ENCODE measurements at regions of chr3 and their contacts with region 1.

Region 1: DNA sequence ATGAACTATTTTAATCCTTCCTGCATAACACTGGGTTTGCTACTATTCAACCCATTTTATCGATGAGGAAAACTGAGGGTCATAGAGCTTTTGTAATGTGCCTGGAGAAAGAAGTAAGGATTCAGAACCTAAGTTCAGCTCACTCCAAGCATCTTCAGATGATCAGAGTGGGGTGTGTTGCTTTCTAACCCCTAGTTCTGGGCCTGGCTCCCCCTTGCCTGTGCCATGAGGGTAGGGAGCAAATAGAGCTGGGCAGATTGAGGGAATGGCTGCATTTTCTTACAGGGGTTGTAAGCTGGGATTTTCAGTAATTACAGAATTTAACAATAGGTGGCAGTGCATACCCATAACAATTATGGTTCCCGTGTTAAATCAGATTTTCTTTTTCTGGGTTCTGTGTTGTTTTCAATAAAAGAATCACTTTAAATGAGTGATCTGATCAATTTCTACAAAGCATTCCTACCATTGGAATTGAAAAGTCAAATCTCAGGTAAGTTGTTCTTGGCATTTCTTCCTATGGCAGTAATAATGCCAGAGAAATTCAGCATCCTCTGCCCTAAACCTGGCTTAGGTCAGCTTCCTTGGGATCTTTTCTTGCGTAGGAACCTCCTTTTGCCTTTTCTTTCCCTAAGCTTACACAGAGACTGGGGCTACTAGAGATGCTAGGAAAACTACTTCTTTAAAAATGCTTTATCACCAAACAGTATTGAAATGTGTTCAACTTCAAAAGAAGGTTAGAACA is 103.8 kb upstream of the IL12A start:
- DNase-seq: no peak
- ATAC-seq: no peak
- H3K4me3 Mint-ChIP-seq: no peak overlapping the region
- H3K27ac Mint-ChIP-seq: no peak overlapping the region
- H3K4me1 Mint-ChIP-seq: no peaks in the 10 kb centered on the region
- H3K27me3 Mint-ChIP-seq: peaks cover 12% of the 10 kb centered on the region

Region 2: GRCh38 chr3:159872374-159873109 is 12.3 kb before region 1 on chr3:
- CTCF ChIA-PET with region 1: interaction called, 12 read pairs
- POLR2A ChIA-PET with region 1: no interaction called
- DNase-seq: no peak
- ATAC-seq: no peak
- H3K4me3 Mint-ChIP-seq: no peak overlapping the region
- H3K27ac Mint-ChIP-seq: no peak overlapping the region
- H3K4me1 Mint-ChIP-seq: no peaks in the 10 kb centered on the region
- H3K27me3 Mint-ChIP-seq: peaks cover 13% of the 10 kb centered on the region

Region 3: DNA sequence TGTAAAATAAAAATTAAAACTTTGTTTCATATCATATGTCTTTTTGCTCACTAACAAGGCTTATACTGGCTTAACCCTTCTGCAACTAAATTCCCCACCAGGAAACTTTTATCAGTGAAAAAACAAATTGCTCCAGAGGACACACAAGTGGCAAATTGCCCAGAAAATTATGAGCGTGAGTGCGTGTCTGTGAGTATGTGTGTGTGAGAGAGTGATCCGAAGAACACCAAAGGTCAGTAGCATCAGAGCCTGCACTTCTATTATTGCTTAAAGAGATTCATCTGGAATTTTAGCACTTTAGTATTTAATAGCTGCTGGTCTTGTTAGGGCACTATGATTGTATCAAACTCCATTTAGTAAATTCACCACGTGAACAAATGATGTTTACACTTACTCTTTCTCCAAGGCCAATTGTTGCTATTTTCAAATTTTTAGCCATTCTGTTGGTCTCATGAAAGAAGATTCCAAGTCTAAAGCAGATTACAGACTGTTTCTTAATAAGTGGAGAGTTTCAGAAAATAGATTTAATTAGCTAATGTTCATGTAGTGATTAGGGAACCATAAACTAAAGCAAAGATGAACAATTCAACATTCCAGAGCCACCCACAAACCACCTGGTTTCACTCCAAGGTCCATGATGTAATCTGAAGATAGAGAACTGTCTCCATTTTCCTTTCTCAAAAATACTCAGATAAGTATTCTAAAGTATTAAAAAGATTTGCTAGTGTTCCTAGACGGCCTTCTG is 12.7 kb after region 1 on chr3:
- CTCF ChIA-PET with region 1: interaction called, 14 read pairs
- POLR2A ChIA-PET with region 1: no interaction called
- DNase-seq: no peak
- ATAC-seq: no peak
- H3K4me3 Mint-ChIP-seq: no peak overlapping the region
- H3K27ac Mint-ChIP-seq: no peak overlapping the region
- H3K4me1 Mint-ChIP-seq: no peaks in the 10 kb centered on the region
- H3K27me3 Mint-ChIP-seq: peaks cover 14% of the 10 kb centered on the region

Region 4: GRCh38 chr3:159988617-159989271 is 103.9 kb after region 1 on chr3 and contains the start of gene IL12A:
- CTCF ChIA-PET with region 1: interaction called, 23 read pairs
- POLR2A ChIA-PET with region 1: no interaction called
- DNase-seq: peak; percentile 85
- ATAC-seq: peak; percentile 97
- H3K4me3 Mint-ChIP-seq: peak within 1 kb of the TSS; percentile 77
- H3K27ac Mint-ChIP-seq: no peak within 1 kb of the TSS
- H3K4me1 Mint-ChIP-seq: peaks cover 14% of the 10 kb centered on the region
- H3K27me3 Mint-ChIP-seq: peaks cover 15% of the 10 kb centered on the region
- total RNA-seq, gene IL12A: not detected

Region 5: GRCh38 chr3:160003520-160004128 is 118.8 kb after region 1 on chr3:
- CTCF ChIA-PET with region 1: interaction called, 96 read pairs
- POLR2A ChIA-PET with region 1: no interaction called
- DNase-seq: peak; percentile 52
- ATAC-seq: peak; percentile 74
- H3K4me3 Mint-ChIP-seq: no peak overlapping the region
- H3K27ac Mint-ChIP-seq: no peak overlapping the region
- H3K4me1 Mint-ChIP-seq: no peaks in the 10 kb centered on the region
- H3K27me3 Mint-ChIP-seq: no peaks in the 10 kb centered on the region

Measured in activated CD8-positive, alpha-beta T cell treated with anti-CD3 and anti-CD28 coated beads, Interleukin-2, amount 10 ng/mL, durations not matched to agents 7 days and 5 days (primary cell).